Transverse colon (tissue), 4 donors: ENCODE measurements at regions of chr6 and their contacts with region 1.

Region 1: DNA sequence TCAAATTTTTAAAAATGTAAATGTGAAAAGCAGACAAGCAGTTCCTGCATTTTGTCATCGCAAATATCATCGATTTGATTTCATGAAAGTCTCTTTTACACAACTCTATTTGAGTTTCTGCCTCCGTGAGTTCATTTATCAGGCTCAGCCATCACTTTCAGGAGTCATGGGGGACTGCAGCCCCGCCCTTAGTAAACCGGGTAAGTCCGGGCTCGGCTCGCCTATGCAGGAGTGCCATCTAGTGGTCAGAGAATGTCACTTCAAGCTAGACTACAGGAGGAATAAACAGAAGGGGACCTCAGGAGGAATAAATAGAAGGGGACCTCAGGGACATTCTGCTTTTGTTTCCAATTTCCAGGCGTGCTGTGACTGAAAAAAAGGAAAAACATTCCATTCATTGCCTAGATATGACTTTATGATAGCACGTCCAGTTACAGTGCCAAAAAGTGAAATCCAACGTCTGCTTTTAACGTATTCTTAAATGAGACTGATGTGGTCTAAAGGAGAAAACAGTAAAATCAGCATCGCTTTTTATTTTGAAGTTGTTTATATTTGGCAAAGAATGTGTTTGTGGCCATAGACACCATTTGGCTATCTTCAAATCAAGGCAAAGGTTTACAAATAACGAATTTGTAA is 333.9 kb downstream of the HACE1 start:
- DNase-seq: peak; percentile 66
- H3K4me3 ChIP-seq: peak overlapping the region in 1 of 4 donors; percentile 2
- H3K27ac ChIP-seq: no peak overlapping the region
- H3K4me1 ChIP-seq: peaks cover 0 to 19% (median 7%) of the 10 kb centered on the region in 4 donors
- H3K27me3 ChIP-seq: peaks cover 9% of the 10 kb centered on the region
- CTCF ChIP-seq: peak; percentile 82 to 95 (median 91)
- EP300 ChIP-seq: no peak
- POLR2A ChIP-seq: no peak

Region 2: GRCh38 chr6:103769431-103769830 is 756.4 kb before region 1 on chr6:
- in situ Hi-C with region 1: no loop called
- intact Hi-C with region 1: no loop called
- DNase-seq: no peak
- H3K4me3 ChIP-seq: no peak overlapping the region
- H3K27ac ChIP-seq: no peak overlapping the region
- H3K4me1 ChIP-seq: no peaks in the 10 kb centered on the region
- H3K27me3 ChIP-seq: no peaks in the 10 kb centered on the region
- CTCF ChIP-seq: no peak
- EP300 ChIP-seq: no peak
- POLR2A ChIP-seq: no peak

Region 3: DNA sequence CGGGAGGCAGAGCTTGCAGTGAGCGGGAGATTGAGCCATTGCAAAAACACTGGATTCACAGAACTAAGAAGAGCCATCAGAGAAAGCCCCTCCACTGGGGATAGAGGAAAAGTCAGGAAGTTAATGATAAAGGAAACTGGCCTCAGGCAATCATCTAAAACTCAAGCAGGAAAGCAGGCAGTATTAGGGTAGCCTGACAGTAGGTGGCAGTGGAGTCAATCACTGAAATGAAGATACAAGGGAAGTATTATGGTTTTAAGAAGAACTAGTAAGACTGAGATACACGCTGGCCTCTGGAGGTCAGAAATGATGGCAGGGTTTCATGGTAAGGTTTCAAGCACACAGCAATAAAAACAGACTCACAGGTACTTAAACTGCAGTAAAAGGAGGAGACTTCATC is 244.4 kb before region 1 on chr6:
- in situ Hi-C with region 1: no loop called
- intact Hi-C with region 1: no loop called
- DNase-seq: no peak
- H3K4me3 ChIP-seq: no peak overlapping the region
- H3K27ac ChIP-seq: no peak overlapping the region
- H3K4me1 ChIP-seq: no peaks in the 10 kb centered on the region
- H3K27me3 ChIP-seq: no peaks in the 10 kb centered on the region
- CTCF ChIP-seq: no peak
- EP300 ChIP-seq: no peak
- POLR2A ChIP-seq: no peak

Region 4: GRCh38 chr6:104325341-104326172 is 200.2 kb before region 1 on chr6:
- in situ Hi-C with region 1: no loop called
- intact Hi-C with region 1: no loop called
- DNase-seq: no peak
- H3K4me3 ChIP-seq: no peak overlapping the region
- H3K27ac ChIP-seq: no peak overlapping the region
- H3K4me1 ChIP-seq: no peaks in the 10 kb centered on the region
- H3K27me3 ChIP-seq: no peaks in the 10 kb centered on the region
- CTCF ChIP-seq: peak in 3 of 5 experiments; percentile 39 to 42 (median 40)
- EP300 ChIP-seq: no peak
- POLR2A ChIP-seq: no peak

Region 5: DNA sequence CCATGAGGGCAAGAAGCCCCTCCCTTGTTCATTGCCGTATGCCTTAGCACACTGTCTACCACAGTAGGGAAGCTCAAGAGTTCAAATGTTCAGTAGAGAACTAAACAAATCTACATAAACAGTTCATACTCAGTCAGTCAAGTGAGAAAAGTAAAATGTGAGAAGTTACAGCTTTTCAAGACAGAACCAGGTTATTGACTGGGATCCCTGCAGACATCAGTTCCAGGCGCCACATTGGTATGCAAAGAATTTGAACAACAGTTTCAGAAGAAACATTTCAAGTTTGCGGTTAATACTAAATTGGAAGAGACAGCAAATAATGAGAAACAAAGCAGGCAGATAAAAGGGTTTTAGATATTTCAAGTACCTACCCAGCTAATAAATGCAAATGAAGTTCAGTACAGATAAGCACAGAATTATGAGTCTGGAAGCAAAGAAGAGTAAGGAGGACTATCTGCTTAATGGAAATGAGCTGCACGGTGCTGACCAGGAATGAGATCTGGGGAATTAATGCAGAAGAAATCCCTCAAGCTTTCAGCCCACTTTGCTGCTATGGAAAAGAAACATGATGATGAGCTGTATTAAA is 87.7 kb after region 1 on chr6:
- in situ Hi-C with region 1: no loop called
- intact Hi-C with region 1: no loop called
- DNase-seq: no peak
- H3K4me3 ChIP-seq: no peak overlapping the region
- H3K27ac ChIP-seq: no peak overlapping the region
- H3K4me1 ChIP-seq: no peaks in the 10 kb centered on the region
- H3K27me3 ChIP-seq: no peaks in the 10 kb centered on the region
- CTCF ChIP-seq: no peak
- EP300 ChIP-seq: no peak
- POLR2A ChIP-seq: no peak

Region 6: DNA sequence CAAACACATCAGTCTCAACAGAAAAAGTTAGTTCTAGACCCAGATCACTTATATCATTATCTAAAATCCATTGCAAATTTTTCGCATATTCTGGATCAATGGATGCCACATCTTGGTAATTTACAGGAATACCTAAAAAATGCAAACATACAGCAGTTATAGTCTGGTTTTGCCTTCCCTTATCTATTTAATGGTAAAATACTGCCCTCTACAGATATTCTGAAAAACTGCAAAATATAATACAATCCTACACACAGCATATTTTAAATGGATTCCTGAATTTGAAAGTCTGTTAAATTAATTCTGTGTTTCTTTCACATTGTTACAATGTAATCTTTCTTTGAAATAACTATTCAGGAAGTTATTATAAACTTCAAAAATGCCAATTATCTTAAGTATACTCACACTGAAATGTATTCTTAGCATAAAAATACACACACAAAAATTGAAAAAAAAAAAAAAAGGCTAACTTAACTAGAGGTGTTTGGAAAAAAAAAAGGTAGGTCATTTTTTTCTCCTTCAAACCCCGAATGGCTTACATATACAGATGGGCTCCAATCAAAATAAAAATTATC is 245.6 kb after region 1 on chr6:
- in situ Hi-C with region 1: loop called in 2 of 4 experiments (anchors 25 kb)
- intact Hi-C with region 1: no loop called
- DNase-seq: no peak
- H3K4me3 ChIP-seq: no peak overlapping the region
- H3K27ac ChIP-seq: no peak overlapping the region
- H3K4me1 ChIP-seq: no peaks in the 10 kb centered on the region
- H3K27me3 ChIP-seq: no peaks in the 10 kb centered on the region
- CTCF ChIP-seq: peak in 4 of 5 experiments; percentile 40 to 57 (median 49)
- EP300 ChIP-seq: no peak
- POLR2A ChIP-seq: no peak